PC-3 (cell line): ENCODE measurements at regions of chr3 and their contacts with region 1.

Region 1: DNA sequence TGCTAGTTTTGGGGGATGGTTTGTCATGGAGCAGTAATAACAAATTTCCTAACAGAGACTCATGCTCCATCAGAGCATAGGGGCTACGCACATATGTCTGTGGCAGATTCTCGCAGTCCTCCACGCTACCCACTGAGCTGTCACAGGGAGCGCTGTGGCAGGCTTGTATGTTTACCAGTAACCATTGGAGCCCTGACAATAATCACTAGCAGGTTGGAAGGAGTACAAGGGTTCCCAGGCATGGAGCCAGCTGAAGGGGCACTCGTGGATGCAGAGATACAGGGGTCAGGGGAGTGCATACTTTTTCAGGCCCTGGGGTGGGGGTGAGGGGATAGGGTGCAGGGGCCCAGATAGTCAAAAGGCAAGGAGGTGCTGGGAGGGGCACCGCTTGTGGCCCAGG is 7.9 kb upstream of the GP9 start:
- DNase-seq: no peak
- ATAC-seq: no peak
- H3K4me3 ChIP-seq: no peak overlapping the region
- H3K27ac ChIP-seq: no peak overlapping the region
- H3K4me1 ChIP-seq: no peaks in the 10 kb centered on the region
- H3K27me3 ChIP-seq: no peaks in the 10 kb centered on the region
- CTCF ChIP-seq: no peak

Region 2: GRCh38 chr3:129120254-129121004 is 67.8 kb after region 1 on chr3:
- CTCF ChIA-PET with region 1: interaction called, 4 read pairs
- POLR2A ChIA-PET with region 1: interaction called, 3 read pairs
- intact Hi-C with region 1: loop called (anchors 2 kb)
- DNase-seq: peak; percentile 88
- ATAC-seq: peak; percentile 57
- H3K4me3 ChIP-seq: peak overlapping the region; percentile 75
- H3K27ac ChIP-seq: peak overlapping the region; percentile 83
- H3K4me1 ChIP-seq: peaks cover 16% of the 10 kb centered on the region
- H3K27me3 ChIP-seq: no peaks in the 10 kb centered on the region
- CTCF ChIP-seq: no peak